Caco-2 (cell line): ENCODE measurements at regions of chr7 and their contacts with region 1.

Region 1: DNA sequence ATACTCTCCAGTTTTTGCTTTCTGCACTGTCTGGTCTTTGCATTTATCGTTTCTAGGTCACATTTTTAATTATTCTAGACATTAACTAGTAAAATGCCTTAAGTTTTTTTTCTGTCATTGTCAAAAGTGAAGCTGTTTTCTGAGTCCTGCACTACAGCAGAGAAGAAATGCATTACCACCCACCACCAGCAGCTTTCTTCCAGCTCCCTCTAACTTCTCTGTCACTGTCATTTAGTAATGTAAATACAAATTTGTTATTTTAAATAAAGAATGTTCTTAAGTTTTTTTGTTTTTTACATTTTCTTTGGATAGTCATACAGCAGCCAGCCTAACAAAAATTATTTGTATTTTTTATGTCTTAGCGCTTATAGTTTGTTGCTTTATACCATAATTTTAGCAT is 18.8 kb downstream of the PTPRZ1 start:
- DNase-seq: no peak
- H3K4me3 ChIP-seq: no peak overlapping the region
- H3K4me3 Mint-ChIP-seq: no peak overlapping the region
- H3K27ac Mint-ChIP-seq: no peak overlapping the region
- H3K4me1 ChIP-seq: no peaks in the 10 kb centered on the region
- H3K4me1 Mint-ChIP-seq: no peaks in the 10 kb centered on the region
- H3K27me3 ChIP-seq: no peaks in the 10 kb centered on the region
- H3K27me3 Mint-ChIP-seq: peaks cover 2% of the 10 kb centered on the region
- CTCF ChIP-seq: no peak

Region 2: DNA sequence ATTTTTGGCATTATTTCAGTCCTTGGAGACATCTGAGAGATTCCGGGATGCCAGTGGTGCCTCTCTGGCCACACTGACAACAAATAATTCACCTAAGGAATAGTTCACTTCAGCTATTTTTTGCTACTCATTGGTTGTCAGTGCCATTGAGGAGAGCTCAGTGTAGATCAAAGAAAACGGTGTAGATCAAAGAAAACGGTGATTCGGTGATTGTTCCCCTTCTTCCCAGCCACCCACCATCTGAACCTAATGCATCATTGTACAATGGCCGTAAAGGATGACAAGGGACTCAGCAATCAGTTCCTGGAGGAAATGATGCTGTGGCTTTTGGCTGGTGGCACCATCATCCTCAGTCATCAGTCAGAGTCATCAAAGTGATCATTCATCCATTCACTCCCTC is 61.9 kb after region 1 on chr7:
- CTCF ChIA-PET with region 1: no interaction called
- POLR2A ChIA-PET with region 1: no interaction called
- intact Hi-C with region 1: loop called (anchors 2 kb)
- DNase-seq: no peak
- H3K4me3 ChIP-seq: no peak overlapping the region
- H3K4me3 Mint-ChIP-seq: no peak overlapping the region
- H3K27ac Mint-ChIP-seq: no peak overlapping the region
- H3K4me1 ChIP-seq: no peaks in the 10 kb centered on the region
- H3K4me1 Mint-ChIP-seq: no peaks in the 10 kb centered on the region
- H3K27me3 ChIP-seq: no peaks in the 10 kb centered on the region
- H3K27me3 Mint-ChIP-seq: peaks cover 23% of the 10 kb centered on the region
- CTCF ChIP-seq: no peak